ENCODE measurements at regions of chr1 and their contacts with region 1.

Region 1: DNA sequence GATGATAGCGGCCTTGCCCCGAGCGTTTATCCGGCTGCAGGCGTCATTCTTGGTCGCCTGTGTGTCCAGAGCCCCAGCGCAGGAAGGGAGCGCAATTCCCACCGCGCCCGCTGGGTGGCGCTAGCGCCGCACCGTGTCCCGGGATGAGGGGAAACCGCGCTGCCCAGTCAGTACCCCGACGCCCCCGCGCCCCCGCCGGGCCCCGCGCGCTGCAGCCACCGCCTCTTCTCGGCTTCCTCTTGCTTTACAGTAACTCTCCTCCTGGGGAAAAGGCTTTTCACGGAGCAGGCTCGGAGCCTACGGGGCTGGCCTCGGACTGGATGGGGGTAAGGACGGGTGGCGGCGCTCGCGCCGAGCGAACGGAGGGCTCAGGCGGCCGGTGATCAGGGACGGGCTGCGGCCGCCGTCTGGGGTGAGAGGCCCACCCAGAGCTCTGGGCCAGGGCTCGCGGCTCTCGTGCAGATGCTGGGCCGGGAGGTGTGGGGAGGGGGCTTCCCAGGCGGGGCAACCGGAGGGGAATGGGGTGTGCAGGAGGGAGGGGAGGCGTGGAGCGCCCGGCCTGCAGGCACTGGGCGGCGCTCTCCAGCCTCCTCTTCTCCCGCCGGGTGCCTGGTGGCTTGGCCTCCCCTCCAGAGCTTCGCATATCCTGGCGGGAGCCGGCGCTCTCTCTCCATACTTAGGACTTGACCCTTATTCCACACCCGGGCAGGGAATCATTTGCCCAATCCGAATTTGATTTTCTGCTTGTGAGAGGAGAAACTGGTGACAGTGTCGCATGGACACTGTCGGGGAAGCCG is 29.8 kb downstream of the TEX35 start:
- DNase-seq: peak; percentile 93
- ATAC-seq: peak; percentile 80
- H3K4me3 ChIP-seq: peak overlapping the region; percentile 84 to 90 (median 88)
- H3K4me3 Mint-ChIP-seq: peak overlapping the region; percentile 99
- H3K27ac ChIP-seq: peak overlapping the region; percentile 55 to 61
- H3K27ac Mint-ChIP-seq: peak overlapping the region; percentile 98
- H3K4me1 ChIP-seq: peaks cover 36 to 46% of the 10 kb centered on the region in 2 donors
- H3K4me1 Mint-ChIP-seq: peaks cover 50% of the 10 kb centered on the region
- H3K27me3 ChIP-seq: no peaks in the 10 kb centered on the region
- H3K27me3 Mint-ChIP-seq: no peaks in the 10 kb centered on the region
- CTCF ChIP-seq: peak; percentile 99

Region 2: GRCh38 chr1:178581351-178582303 is 38.9 kb after region 1 on chr1:
- CTCF ChIA-PET with region 1: interaction called, 64 read pairs
- POLR2A ChIA-PET with region 1: interaction called, 20 read pairs
- intact Hi-C with region 1: loop called (anchors 1 kb)
- DNase-seq: peak; percentile 87
- ATAC-seq: peak; percentile 65
- H3K4me3 ChIP-seq: peak overlapping the region in 3 of 5 experiments; percentile 24 to 53 (median 29)
- H3K4me3 Mint-ChIP-seq: peak overlapping the region; percentile 70
- H3K27ac ChIP-seq: peak overlapping the region; percentile 95 to 97
- H3K27ac Mint-ChIP-seq: peak overlapping the region; percentile 95
- H3K4me1 ChIP-seq: peaks cover 91 to 92% of the 10 kb centered on the region in 2 donors
- H3K4me1 Mint-ChIP-seq: peaks cover 93% of the 10 kb centered on the region
- H3K27me3 ChIP-seq: no peaks in the 10 kb centered on the region
- H3K27me3 Mint-ChIP-seq: no peaks in the 10 kb centered on the region
- CTCF ChIP-seq: no peak

Region 3: GRCh38 chr1:178725603-178726517 is 183.1 kb after region 1 on chr1:
- CTCF ChIA-PET with region 1: interaction called, 106 read pairs
- POLR2A ChIA-PET with region 1: interaction called, 33 read pairs
- intact Hi-C with region 1: loop called (anchors 1 kb)
- DNase-seq: peak; percentile 89
- ATAC-seq: peak; percentile 68
- H3K4me3 ChIP-seq: peak overlapping the region; percentile 70 to 99 (median 79)
- H3K4me3 Mint-ChIP-seq: peak overlapping the region; percentile 96
- H3K27ac ChIP-seq: peak overlapping the region; percentile 78 to 90
- H3K27ac Mint-ChIP-seq: peak overlapping the region; percentile 94
- H3K4me1 ChIP-seq: peaks cover 28 to 33% of the 10 kb centered on the region in 2 donors
- H3K4me1 Mint-ChIP-seq: peaks cover 52% of the 10 kb centered on the region
- H3K27me3 ChIP-seq: no peaks in the 10 kb centered on the region
- H3K27me3 Mint-ChIP-seq: no peaks in the 10 kb centered on the region
- CTCF ChIP-seq: no peak

Region 4: DNA sequence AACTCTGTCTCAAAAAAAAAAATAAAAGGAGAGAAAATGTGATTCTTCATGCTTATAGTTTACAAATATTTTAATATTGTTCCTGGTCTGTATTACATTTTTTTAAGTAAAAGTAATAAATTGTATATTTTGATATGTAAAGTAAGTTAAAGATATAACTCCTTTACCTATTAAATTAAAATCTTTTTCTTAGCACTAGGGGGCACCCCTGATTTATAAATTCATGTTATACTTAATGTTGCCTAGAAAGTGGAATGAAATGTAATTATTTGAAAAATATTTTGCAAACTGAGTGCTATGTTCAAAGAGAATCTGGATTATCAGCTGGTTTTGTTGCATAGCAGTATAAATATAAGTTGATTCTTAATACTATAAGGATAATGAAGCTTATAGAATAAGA is 231.5 kb after region 1 on chr1:
- CTCF ChIA-PET with region 1: interaction called, 42 read pairs
- POLR2A ChIA-PET with region 1: no interaction called
- intact Hi-C with region 1: loop called (anchors 2 kb)
- DNase-seq: no peak
- ATAC-seq: peak; percentile 33
- H3K4me3 ChIP-seq: no peak overlapping the region
- H3K4me3 Mint-ChIP-seq: no peak overlapping the region
- H3K27ac ChIP-seq: peak overlapping the region in 1 of 2 donors; percentile 56
- H3K27ac Mint-ChIP-seq: no peak overlapping the region
- H3K4me1 ChIP-seq: peaks cover 14 to 39% of the 10 kb centered on the region in 2 donors
- H3K4me1 Mint-ChIP-seq: peaks cover 51% of the 10 kb centered on the region
- H3K27me3 ChIP-seq: no peaks in the 10 kb centered on the region
- H3K27me3 Mint-ChIP-seq: no peaks in the 10 kb centered on the region
- CTCF ChIP-seq: peak; percentile 51

Region 5: DNA sequence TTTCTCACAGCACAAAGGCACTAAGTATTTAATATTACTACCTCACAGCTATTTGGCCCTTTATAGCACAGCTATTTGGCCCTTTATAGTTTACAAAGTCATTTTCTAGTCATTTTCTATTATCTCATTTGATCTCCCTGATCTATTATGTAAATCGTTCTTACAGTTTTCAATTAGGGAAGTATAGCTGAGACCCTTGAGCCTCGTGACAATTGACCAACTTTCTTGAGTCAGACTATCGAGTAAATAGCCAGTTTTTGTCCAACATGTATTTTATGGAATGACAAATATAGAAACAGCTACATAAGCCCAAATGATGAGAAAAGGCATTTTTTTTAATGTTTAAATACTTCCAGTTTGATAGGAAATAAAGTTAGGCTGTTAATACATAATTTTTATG is 335.1 kb after region 1 on chr1:
- CTCF ChIA-PET with region 1: interaction called, 12 read pairs
- POLR2A ChIA-PET with region 1: no interaction called
- intact Hi-C with region 1: no loop called
- DNase-seq: no peak
- ATAC-seq: no peak
- H3K4me3 ChIP-seq: no peak overlapping the region
- H3K4me3 Mint-ChIP-seq: no peak overlapping the region
- H3K27ac ChIP-seq: peak overlapping the region in 1 of 2 donors; percentile 35
- H3K27ac Mint-ChIP-seq: no peak overlapping the region
- H3K4me1 ChIP-seq: no peaks in the 10 kb centered on the region
- H3K4me1 Mint-ChIP-seq: peaks cover 9% of the 10 kb centered on the region
- H3K27me3 ChIP-seq: no peaks in the 10 kb centered on the region
- H3K27me3 Mint-ChIP-seq: no peaks in the 10 kb centered on the region
- CTCF ChIP-seq: no peak